Activated CD8-positive, alpha-beta T cell treated with anti-CD3 and anti-CD28 coated beads for 36 hours (primary cell): ENCODE measurements at regions of chr10 and their contacts with region 1.

Region 1: GRCh38 chr10:118850418-118851061 is 95.8 kb upstream of the CACUL1 start:
- DNase-seq: peak; percentile 94
- ATAC-seq: peak; percentile 87
- H3K4me3 Mint-ChIP-seq: no peak overlapping the region
- H3K27ac Mint-ChIP-seq: no peak overlapping the region
- H3K4me1 Mint-ChIP-seq: no peaks in the 10 kb centered on the region
- H3K27me3 Mint-ChIP-seq: peaks cover 2% of the 10 kb centered on the region
- CTCF ChIP-seq: peak; percentile 75

Region 2: DNA sequence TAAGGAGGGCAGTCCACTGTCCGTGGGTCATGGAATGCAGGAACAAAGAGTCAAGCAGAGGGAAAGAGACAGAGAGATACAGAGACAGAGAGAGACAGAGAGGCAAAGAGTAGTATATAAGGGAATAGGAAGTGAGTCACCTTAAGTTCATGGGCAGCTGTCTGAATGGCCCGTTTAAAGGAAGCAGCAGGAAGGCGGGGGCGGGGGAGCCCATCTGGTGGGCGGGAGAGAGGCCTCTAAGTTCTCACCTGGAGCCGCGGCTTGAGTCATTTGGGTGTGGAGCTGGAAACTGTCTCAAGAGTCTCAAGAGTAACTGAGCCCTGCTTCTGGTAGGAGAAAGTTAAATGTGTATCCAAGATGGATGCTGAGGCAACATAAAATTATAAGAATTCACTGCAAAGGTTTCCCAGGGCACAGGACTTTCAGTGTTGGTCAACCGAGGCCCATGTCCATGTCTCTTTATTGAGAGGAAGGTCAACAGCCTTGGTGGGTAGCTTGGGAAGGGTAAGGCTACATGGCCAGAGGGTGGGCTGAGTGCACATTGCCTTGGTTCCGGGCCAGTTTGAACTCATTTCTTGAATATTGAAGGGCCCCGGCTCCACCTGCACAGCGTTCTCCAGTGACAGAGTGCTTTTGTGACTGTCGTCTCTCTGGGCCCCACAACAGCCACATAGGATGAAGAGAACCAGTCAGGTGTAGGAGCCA is 10.3 kb before region 1 on chr10:
- CTCF ChIA-PET with region 1: interaction called, 10 read pairs
- POLR2A ChIA-PET with region 1: no interaction called
- intact Hi-C with region 1: no loop called
- DNase-seq: peak; percentile 96
- ATAC-seq: peak; percentile 97
- H3K4me3 Mint-ChIP-seq: no peak overlapping the region
- H3K27ac Mint-ChIP-seq: peak overlapping the region; percentile 69
- H3K4me1 Mint-ChIP-seq: peaks cover 17% of the 10 kb centered on the region
- H3K27me3 Mint-ChIP-seq: no peaks in the 10 kb centered on the region
- CTCF ChIP-seq: no peak